Right lobe of liver (tissue), 6 donors: ENCODE measurements at regions of chr20 and their contacts with region 1.

Region 1: GRCh38 chr20:43755390-43755789 is 28.6 kb upstream of the GTSF1L start:
- DNase-seq: no peak
- ATAC-seq: no peak
- H3K4me3 ChIP-seq: no peak overlapping the region
- H3K27ac ChIP-seq: no peak overlapping the region
- H3K4me1 ChIP-seq: no peaks in the 10 kb centered on the region
- H3K27me3 ChIP-seq: no peaks in the 10 kb centered on the region
- CTCF ChIP-seq: no peak
- POLR2A ChIP-seq: no peak

Region 2: DNA sequence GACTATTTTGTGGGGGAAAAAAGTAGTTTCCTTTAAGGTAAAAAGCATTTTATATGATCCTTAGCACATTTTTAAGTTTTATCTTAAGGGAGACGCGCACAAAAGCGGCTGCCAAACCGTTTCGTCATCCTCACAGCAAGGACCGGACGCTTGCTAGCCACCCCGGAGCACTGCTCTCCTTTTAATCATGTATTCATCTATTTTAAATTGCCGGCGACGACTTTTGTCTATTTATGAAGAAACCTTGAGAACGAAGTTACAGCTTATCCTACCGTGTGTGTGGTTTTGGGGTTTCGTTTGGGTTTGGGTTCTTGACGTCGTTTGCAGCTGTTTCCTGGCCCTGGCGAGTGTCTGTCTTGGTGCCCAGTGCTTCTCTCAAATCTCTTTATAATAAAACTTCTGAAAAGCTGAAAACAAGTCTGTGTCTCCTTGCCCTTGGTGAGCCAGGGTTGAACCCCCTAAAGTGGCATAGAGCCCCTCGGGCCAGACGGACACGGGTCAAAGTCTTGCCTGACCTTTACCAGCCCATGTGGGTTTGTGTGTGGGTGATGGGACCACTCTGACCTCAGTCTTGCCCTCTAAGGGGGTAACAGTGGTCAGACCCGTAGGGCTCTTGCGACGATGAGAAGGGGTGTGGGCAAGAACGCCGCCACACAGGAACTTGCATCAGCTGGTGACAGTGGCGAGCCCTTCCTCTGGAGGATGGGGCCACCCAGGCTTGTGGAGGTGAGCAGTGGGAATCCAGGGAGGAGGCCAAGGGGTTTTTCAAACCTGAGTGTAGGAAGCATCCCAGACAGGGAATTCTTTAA is 314.0 kb after region 1 on chr20:
- intact Hi-C with region 1: loop called in 1 of 2 experiments (anchors 5 kb)
- DNase-seq: peak in 2 of 3 donors; percentile 55 to 66
- ATAC-seq: peak in 3 of 4 donors; percentile 32 to 35 (median 33)
- H3K4me3 ChIP-seq: no peak overlapping the region
- H3K27ac ChIP-seq: peak overlapping the region in 2 of 3 donors; percentile 24 to 47
- H3K4me1 ChIP-seq: no peaks in the 10 kb centered on the region
- H3K27me3 ChIP-seq: no peaks in the 10 kb centered on the region
- CTCF ChIP-seq: no peak
- POLR2A ChIP-seq: no peak